ENCODE measurements at regions of chr3 and their contacts with region 1.

Region 1: GRCh38 chr3:158845765-158846350 is 44.0 kb downstream of the MFSD1 start:
- DNase-seq: no peak
- ATAC-seq: peak; percentile 53

Region 2: GRCh38 chr3:159260049-159260662 is 414.3 kb after region 1 on chr3:
- intact Hi-C with region 1: loop called (anchors 2 to 10 kb)
- DNase-seq: peak in 1 of 2 donors; percentile 40
- ATAC-seq: peak; percentile 51